ENCODE measurements at regions of chr18 and their contacts with region 1.

Region 1: DNA sequence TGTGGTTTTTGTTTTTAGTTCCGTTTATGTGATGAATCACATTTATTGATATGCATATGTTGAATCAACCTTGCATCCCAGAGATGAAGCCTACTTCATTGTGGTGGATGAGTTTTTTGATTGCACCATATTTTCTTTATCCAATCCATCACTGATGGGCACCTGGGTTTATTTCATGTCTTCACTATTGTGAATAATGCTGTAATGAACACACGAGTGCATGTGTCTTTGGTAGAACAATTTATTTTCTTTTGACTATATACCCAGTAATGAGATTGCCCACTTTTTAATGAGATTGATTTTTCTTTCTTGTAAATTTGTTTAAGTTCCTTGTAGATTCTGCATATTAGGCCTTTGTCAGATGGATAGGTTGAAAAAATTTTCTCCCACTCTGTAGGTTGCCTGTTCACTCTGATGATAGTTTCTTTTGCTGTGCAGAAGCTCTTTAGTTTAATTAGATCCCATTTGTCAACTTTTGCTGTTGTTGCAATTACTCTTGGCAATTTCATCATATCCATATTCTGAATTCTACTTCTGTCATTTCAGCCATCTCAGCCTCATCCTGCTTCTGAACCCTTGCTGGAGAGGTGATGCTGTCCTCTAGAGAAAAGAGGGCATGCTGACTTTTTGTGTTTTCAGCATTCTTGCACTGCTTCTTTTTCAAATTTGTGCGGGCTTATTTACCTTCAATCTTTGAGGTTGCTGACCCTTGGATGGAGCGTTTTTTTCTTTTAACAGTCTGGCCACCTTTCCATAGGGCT is 96.2 kb upstream of the CTAGE1 start:
- DNase-seq: no peak
- H3K4me3 ChIP-seq: no peak overlapping the region
- H3K27ac ChIP-seq: no peak overlapping the region
- H3K4me1 ChIP-seq: no peaks in the 10 kb centered on the region
- H3K27me3 ChIP-seq: no peaks in the 10 kb centered on the region
- CTCF ChIP-seq: no peak
- POLR2A ChIP-seq: no peak

Region 2: DNA sequence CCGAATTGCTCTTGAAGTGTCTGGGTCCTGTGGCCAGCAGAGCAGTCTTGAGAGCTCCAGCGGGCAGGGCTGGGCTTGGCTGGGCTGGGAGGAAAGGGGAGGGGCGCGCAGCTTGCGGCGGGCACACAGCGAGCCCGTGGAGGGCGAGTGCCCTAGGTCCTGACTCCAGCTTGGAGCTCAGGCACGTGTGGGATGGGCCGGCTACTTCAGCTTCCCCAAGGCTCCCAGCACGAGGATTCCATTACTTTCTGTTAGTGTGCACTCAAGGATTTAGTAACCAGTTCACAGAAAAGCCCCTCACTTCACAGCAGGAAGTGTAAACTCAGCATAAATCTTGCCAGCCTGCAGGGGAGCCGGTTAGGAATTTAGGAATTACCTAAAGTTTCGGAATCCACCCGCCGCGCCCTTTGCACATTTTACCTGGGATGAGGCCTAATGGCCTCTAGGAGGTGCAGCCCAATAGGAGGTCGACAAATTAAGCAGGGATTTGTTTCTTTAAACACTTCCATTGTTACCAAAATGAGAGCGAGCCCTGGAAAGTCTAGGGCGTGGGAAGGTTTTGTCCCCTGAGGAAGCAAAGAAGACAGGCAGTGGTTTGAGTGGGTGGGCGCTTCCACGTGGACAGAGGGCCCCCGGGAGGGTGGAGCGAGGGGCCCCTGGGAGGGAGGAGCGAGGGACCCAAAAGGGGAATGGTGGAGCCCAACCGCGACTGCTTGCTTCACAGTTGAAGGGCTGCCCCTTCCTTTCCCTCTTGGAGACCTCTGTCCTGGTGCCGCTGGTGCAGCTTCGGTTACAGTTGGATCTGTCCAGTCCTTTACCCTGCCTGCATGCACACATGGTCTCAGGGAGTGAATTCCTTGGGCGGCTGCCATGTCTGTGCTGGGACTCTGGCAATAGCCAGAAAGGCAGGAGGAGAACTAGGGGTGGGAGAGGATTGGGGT is 189.4 kb before region 1 on chr18:
- intact Hi-C with region 1: no loop called
- DNase-seq: peak in 1 of 2 donors; percentile 94
- H3K4me3 ChIP-seq: peak overlapping the region in 1 of 2 donors; percentile 26
- H3K27ac ChIP-seq: no peak overlapping the region
- H3K4me1 ChIP-seq: peaks cover 9% of the 10 kb centered on the region
- H3K27me3 ChIP-seq: no peaks in the 10 kb centered on the region
- CTCF ChIP-seq: no peak
- POLR2A ChIP-seq: no peak

Region 3: DNA sequence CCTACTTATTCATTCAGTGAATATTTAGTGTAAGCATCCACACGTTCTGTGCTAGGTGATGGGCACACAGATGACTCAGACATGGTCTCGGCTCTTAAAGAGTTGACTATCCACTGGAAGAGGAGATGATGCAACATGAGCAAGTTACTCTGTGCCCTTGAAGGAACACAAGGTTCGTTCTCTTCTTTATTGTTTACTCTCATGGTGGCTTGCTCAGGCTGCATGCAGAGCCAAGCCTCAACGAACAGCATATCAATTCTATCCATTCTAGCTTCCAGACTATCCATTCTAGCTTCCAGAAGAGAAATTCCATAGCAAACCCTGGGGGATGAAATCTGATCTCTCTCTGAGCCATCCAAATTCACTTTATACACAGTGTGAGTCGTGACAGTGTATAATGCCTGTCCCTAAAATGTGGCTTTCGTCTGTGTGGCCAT is 28.1 kb before region 1 on chr18:
- intact Hi-C with region 1: loop called (anchors 1 kb)
- DNase-seq: no peak
- H3K4me3 ChIP-seq: no peak overlapping the region
- H3K27ac ChIP-seq: no peak overlapping the region
- H3K4me1 ChIP-seq: no peaks in the 10 kb centered on the region
- H3K27me3 ChIP-seq: no peaks in the 10 kb centered on the region
- CTCF ChIP-seq: no peak
- POLR2A ChIP-seq: no peak